Activated CD4-positive, alpha-beta T cell treated with anti-CD3 and anti-CD28 coated beads, Interleukin-2, amount 10 ng/mL, durations not matched to agents 24 days and 14 days (primary cell): ENCODE measurements at regions of chr16 and their contacts with region 1.

Region 1: DNA sequence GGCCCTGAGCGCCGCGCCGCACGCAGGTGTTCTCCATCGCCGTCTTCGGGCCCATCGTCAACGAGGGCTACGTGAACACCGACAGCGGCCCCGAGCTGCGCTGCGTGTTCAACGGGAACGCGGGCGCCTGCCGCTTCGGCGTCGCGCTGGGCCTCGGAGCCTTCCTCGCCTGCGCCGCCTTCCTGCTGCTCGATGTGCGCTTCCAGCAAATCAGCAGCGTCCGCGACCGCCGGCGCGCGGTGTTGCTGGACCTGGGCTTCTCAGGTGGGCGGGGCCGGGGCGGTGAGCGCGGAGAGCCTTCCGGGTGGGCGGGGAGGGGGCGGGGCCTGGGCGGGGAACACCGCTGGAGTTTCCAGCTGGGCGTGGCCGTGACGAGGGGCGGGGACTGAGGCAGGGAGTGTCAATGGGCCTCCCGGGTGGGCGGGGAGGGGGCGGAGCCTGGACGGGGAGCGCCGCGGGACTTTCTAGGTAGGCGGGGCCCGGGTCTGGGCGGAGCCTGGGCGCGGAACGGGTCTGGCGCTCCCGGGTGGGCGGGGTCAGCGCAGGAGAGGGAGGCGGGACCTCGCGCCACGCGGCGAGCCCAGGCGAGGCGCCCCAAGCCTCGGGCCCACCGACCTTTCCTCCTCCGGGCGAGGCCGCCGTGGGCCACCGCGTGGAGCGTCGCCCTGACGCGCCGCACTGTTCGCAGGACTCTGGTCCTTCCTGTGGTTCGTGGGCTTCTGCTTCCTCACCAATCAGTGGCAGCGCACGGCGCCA is 2.4 kb downstream of the SYNGR3 start:
- DNase-seq: peak; percentile 98
- H3K4me3 Mint-ChIP-seq: peak overlapping the region; percentile 86
- H3K27ac Mint-ChIP-seq: peak overlapping the region; percentile 83
- H3K4me1 Mint-ChIP-seq: peaks cover 21% of the 10 kb centered on the region
- H3K27me3 Mint-ChIP-seq: peaks cover 13% of the 10 kb centered on the region

Region 2: DNA sequence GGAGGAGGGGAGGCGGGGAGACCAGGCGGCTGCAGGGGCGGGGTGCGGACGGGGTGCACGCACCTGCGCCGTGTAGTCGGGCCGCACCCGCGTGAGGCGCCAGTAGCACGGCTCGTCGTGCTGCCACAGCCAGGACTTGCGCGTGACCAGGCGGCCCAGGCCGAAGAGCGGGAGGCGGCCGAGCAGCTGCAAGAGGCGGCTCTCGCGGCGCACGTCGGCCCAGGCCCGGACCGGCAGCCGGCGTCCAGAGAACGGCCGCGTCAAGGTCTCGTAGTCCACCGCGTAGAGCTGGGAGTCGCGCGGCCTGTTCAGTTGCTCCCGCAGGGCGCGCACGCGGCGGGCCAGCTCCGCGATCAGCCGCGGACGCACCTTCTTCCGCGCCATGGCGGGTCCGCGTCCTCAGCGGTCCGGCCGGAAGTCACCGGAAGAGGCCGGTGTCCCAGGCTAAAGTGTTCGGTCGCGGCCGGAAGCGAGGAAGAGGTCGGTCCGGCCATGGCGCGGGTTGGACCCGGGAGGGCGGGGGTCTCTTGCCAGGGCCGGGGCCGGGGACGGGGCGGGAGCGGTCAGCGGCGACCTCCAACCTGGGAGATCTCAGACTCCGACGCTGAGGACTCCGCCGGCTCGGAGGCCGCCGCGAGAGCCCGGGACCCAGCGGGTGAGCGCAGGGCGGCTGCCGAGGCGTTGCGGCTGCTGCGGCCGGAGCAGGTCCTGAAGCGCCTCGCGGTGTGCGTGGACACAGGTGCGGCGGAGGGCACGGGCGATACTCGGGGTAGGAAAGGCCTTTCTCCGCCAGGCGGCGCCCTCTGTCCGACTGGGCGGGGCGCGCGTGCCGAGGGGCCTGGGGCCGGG is 219.2 kb before region 1 on chr16 and contains the starts of genes EME2 and MRPS34:
- intact Hi-C with region 1: no loop called
- DNase-seq: peak; percentile 96
- H3K4me3 Mint-ChIP-seq: peak within 1 kb of the TSS; percentile 93
- H3K27ac Mint-ChIP-seq: peak within 1 kb of the TSS; percentile 95
- H3K4me1 Mint-ChIP-seq: peaks cover 10% of the 10 kb centered on the region
- H3K27me3 Mint-ChIP-seq: no peaks in the 10 kb centered on the region
- total RNA-seq, gene EME2: 28.2 and 30.0 TPM in 2 replicates
- total RNA-seq, gene MRPS34: 201 and 207 TPM in 2 replicates

Region 3: DNA sequence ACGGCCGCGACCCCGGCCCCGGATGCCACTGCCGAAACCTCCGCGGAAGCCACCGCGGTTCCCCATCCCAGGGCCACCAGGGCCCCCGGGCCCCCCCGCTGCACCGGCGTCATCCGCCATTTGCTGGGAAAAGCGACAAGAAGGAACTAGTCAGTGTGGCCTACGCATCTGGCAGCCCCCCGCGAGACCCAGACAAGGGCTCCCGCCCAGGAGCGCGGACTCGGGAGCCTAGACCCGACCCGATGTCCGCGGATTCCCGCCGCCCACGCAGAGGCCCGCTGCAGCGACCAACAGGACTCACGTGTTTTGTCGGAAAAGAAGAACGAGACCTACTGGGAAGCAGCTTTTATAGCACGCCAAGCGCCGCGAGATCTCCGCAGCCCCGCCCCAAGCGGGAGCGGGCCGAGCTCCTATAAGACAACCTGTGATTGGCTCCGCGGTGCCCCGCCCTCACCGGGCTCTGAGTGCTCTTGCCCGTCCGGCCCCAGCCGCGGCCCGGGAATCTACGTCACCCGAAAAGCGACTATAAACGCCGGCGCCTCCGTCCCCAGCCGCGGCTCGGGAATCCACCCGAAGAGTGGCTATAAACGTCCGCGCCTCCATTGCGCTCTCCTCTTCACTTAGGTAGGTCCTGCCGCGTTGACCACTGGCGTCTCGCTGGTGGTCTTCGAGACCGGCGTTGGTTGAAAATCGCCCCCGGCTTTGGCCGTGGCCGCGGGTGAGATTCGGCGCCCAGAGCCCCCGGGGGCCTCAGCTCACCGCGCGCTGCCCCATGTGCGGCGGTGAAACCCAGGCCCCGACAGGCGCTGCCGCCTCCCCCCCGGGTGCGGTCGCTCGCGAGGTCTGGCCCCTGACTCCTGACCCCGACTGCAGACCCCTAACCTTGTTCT is 27.4 kb before region 1 on chr16 and contains the start of gene RPS2:
- intact Hi-C with region 1: loop called (anchors 2 kb)
- DNase-seq: peak; percentile 100
- H3K4me3 Mint-ChIP-seq: peak within 1 kb of the TSS; percentile 99
- H3K27ac Mint-ChIP-seq: peak within 1 kb of the TSS; percentile 97
- H3K4me1 Mint-ChIP-seq: peaks cover 31% of the 10 kb centered on the region
- H3K27me3 Mint-ChIP-seq: no peaks in the 10 kb centered on the region
- total RNA-seq, gene RPS2: 3,359 and 3,401 TPM in 2 replicates

Region 4: DNA sequence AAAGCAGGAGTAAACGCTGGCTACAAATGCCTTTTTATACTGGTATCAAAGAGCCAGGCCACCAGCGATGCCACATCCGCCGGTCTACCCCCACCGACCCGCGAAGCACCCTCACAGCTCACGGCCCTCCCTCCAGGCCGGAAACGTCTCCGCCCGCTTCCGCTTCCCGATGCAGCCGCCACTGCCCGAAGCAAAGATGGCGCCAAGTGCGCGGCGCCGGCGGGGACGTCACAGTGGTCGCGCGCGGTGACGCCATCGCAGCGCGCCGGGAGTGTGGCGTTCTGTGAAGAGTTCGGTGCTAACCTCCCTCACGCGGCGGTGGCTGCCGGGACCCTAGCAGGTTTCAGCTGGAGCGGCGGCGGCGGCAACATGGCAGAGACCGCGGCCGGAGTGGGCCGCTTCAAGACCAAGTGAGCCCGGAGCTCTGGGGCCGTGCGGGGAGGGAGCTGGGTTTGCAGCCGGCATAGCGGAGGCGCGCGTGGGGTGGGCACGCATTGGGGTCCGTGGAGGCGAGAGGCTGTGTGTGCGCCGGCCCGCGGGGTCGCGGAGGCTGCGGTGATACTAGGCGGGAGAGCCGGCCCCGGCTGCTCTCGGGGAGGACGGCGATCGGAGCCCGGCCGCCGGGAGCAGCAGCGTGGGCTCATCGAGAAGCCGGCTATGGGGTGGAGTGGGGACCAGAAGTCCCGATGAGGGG is 20.2 kb before region 1 on chr16 and contains the start of gene TBL3:
- intact Hi-C with region 1: loop called (anchors 1 kb)
- DNase-seq: peak; percentile 99
- H3K4me3 Mint-ChIP-seq: peak within 1 kb of the TSS; percentile 99
- H3K27ac Mint-ChIP-seq: peak within 1 kb of the TSS; percentile 95
- H3K4me1 Mint-ChIP-seq: peaks cover 17% of the 10 kb centered on the region
- H3K27me3 Mint-ChIP-seq: no peaks in the 10 kb centered on the region
- total RNA-seq, gene TBL3: 81.4 and 87.5 TPM in 2 replicates

Region 5: DNA sequence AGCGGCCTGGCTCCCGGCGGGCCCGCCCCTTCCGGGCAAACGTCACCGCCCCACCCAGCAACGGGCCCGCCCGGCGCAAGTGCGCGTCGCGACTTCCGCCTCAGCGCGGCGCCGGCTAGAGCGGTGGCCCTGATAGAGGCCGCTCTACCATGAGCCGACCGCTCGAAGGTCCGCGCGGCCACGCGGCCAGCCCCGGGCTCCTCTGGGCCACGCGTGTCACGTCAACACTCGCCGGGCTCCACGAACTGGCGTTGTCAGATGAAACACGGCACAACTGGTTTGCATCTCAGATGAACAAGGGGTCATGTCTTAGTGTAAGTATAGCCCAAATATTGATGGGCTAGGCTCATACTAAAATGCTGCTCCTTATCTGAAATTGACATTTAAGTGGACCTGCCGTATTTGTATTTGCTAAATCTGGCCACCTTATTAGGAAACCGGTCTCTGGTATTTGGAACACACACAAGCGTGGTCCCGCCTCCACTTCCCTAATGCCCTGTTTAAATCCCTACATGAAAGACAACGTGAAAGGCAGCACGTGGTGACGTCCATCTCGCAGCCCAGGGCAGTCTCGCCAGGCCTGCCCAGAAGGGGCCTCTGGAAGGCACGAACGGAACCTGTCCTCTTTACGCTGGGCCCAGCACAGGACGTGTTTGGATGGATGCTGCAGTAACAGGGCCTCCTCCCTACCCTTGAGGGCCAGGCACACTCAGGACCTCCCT is 17.8 kb after region 1 on chr16 and contains the start of gene ZNF598:
- intact Hi-C with region 1: loop called (anchors 1 kb)
- DNase-seq: peak; percentile 95
- H3K4me3 Mint-ChIP-seq: peak within 1 kb of the TSS; percentile 93
- H3K27ac Mint-ChIP-seq: peak within 1 kb of the TSS; percentile 92
- H3K4me1 Mint-ChIP-seq: peaks cover 28% of the 10 kb centered on the region
- H3K27me3 Mint-ChIP-seq: no peaks in the 10 kb centered on the region
- total RNA-seq, gene ZNF598: 93.9 and 99.0 TPM in 2 replicates

Region 6: DNA sequence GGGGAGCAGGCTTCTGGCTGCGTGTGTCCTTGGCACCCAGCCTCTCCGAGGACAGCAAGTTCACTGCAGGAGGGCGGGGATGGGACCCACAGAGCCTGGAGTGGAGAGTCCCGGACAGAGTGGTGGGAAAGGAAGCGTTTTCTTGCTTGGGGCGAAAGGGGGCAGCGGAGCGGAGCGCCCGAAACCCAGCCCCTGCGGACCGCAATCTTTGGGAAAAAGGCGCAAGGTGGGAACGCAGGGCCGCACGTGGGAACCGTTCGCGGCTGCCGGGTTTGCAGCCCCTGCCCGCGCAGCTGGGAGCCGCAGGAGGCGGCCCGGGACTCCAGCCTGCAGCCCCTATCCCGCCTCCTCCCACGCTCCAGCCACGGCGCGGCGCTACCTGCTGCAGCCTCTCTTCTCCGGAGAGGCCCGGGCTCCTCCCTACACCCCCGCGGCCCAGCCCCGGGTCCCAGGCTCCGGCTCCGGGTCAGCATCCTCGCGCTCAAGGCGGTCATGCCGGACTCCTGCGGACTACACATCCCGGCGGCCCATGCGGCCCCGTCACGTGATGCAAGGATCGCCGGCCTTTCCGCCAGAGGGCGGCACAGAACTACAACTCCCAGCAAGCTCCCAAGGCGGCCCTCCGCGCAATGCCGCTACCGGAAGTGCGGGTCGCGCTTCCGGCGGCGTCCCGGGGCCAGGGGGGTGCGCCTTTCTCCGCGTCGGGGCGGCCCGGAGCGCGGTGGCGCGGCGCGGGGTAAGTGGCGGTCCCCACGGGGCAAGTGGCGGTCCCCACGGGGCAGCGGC is 55.4 kb after region 1 on chr16 and contains the starts of genes NTHL1 and TSC2:
- intact Hi-C with region 1: loop called (anchors 5 kb)
- DNase-seq: peak; percentile 99
- H3K4me3 Mint-ChIP-seq: peak within 1 kb of the TSS; percentile 92
- H3K27ac Mint-ChIP-seq: peak within 1 kb of the TSS; percentile 83
- H3K4me1 Mint-ChIP-seq: peaks cover 14% of the 10 kb centered on the region
- H3K27me3 Mint-ChIP-seq: no peaks in the 10 kb centered on the region
- total RNA-seq, gene NTHL1: 50.3 and 57.7 TPM in 2 replicates
- total RNA-seq, gene TSC2: 98.8 and 99.8 TPM in 2 replicates

Region 7: GRCh38 chr16:2531767-2532493 is 539.8 kb after region 1 on chr16:
- intact Hi-C with region 1: no loop called
- DNase-seq: peak; percentile 99
- H3K4me3 Mint-ChIP-seq: peak overlapping the region; percentile 96
- H3K27ac Mint-ChIP-seq: peak overlapping the region; percentile 98
- H3K4me1 Mint-ChIP-seq: peaks cover 18% of the 10 kb centered on the region
- H3K27me3 Mint-ChIP-seq: no peaks in the 10 kb centered on the region